Caco-2 (cell line): ENCODE measurements at regions of chr13 and their contacts with region 1.

Region 1: DNA sequence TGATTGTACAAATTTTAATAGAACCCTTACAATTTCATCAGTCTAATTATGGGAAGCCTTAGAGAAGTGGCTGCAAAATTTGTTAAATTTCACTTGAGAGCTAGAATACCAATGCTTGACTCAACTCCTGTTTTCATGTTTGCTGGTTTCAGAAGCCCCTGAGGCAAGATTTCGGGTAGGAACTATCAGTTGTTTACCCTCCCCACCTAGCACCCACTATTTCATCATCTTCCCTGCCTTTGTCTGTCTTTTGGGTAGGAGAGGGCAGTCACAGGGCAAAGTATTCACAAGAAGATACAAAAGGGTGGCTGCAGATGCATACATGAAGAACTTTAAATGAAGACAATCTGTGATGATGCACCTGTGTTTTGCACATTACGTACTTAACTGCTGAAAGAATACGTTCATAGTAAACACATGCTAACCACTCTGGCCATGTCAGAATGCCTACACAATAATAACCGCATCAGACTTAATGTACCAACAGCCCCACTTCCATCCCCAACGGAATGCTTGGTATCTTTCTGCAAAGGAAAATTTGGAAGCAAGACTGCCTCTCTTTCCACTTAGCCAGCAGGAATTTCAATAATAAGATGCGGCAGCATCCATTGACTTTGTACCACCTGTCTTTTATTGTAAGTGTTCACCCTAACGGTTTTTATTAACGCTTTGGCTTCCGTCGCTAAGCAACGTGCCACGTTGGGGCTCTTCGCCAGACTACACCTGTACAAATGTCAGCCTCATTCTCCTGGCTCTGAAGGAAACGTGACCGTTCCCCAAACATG is 30.4 kb downstream of the TPT1 start:
- DNase-seq: no peak
- H3K4me3 ChIP-seq: peak overlapping the region; percentile 53
- H3K4me3 Mint-ChIP-seq: peak overlapping the region; percentile 65
- H3K27ac Mint-ChIP-seq: no peak overlapping the region
- H3K4me1 ChIP-seq: peaks cover 13% of the 10 kb centered on the region
- H3K4me1 Mint-ChIP-seq: peaks cover 10% of the 10 kb centered on the region
- H3K27me3 ChIP-seq: no peaks in the 10 kb centered on the region
- H3K27me3 Mint-ChIP-seq: no peaks in the 10 kb centered on the region
- CTCF ChIP-seq: no peak

Region 2: GRCh38 chr13:44969551-44970484 is 340.7 kb before region 1 on chr13:
- CTCF ChIA-PET with region 1: no interaction called
- POLR2A ChIA-PET with region 1: interaction called, 3 read pairs
- intact Hi-C with region 1: loop called (anchors 1 kb)
- DNase-seq: peak in 1 of 2 experiments; percentile 62
- H3K4me3 ChIP-seq: no peak overlapping the region
- H3K4me3 Mint-ChIP-seq: no peak overlapping the region
- H3K27ac Mint-ChIP-seq: no peak overlapping the region
- H3K4me1 ChIP-seq: peaks cover 14% of the 10 kb centered on the region
- H3K4me1 Mint-ChIP-seq: peaks cover 14% of the 10 kb centered on the region
- H3K27me3 ChIP-seq: no peaks in the 10 kb centered on the region
- H3K27me3 Mint-ChIP-seq: no peaks in the 10 kb centered on the region
- CTCF ChIP-seq: peak; percentile 74 to 81

Region 3: DNA sequence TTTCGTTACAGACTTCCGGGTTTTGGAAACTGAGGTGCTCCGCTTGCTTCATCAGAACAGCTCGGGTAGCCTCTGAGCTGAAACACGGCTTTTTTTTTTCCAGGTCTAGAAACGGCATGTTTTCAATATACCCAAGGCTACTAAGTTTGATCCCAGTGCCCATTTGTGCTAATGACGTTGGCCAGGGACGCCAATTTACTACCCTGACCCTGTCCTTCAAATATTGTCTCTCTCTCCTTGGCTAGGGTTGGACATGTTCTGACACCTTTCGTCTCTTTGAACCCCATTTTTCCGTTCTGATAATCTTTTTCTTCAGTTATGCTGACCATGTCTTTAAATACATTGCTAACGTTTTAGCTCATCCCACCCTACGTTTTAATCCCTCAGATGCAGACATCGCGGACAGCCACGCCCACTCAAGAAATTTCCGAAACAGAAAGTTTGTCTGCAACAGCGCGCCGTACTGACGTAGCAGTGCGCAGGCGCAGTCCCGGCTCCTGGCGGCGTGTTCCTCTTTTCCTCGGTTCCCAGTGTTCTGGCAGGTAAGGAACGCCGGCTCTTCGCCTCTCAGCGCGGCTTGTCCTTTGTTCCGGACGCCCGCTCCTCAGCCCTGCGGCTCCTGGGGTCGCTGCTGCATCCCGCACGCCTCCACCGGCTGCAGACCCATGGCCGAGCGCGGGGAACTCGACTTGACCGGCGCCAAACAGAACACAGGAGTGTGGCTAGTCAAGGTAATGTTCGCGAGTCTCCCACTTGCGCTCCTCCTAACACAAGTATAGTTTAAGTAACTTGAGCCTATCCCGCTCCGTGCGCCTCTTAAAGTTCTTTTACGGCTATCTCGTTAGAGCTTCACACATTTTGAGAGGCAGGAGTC is 190.3 kb before region 1 on chr13 and contains the start of gene GTF2F2:
- CTCF ChIA-PET with region 1: interaction called, 6 read pairs
- POLR2A ChIA-PET with region 1: no interaction called
- intact Hi-C with region 1: loop called (anchors 1 kb)
- DNase-seq: peak; percentile 92 to 94
- H3K4me3 ChIP-seq: peak within 1 kb of the TSS; percentile 64
- H3K4me3 Mint-ChIP-seq: no peak within 1 kb of the TSS
- H3K27ac Mint-ChIP-seq: no peak within 1 kb of the TSS
- H3K4me1 ChIP-seq: peaks cover 11% of the 10 kb centered on the region
- H3K4me1 Mint-ChIP-seq: no peaks in the 10 kb centered on the region
- H3K27me3 ChIP-seq: no peaks in the 10 kb centered on the region
- H3K27me3 Mint-ChIP-seq: no peaks in the 10 kb centered on the region
- CTCF ChIP-seq: no peak
- total RNA-seq, gene GTF2F2: 28.1 and 30.8 TPM in 2 replicates

Region 4: GRCh38 chr13:45132369-45133064 is 178.0 kb before region 1 on chr13:
- CTCF ChIA-PET with region 1: no interaction called
- POLR2A ChIA-PET with region 1: no interaction called
- intact Hi-C with region 1: no loop called
- DNase-seq: no peak
- H3K4me3 ChIP-seq: no peak overlapping the region
- H3K4me3 Mint-ChIP-seq: no peak overlapping the region
- H3K27ac Mint-ChIP-seq: no peak overlapping the region
- H3K4me1 ChIP-seq: no peaks in the 10 kb centered on the region
- H3K4me1 Mint-ChIP-seq: no peaks in the 10 kb centered on the region
- H3K27me3 ChIP-seq: no peaks in the 10 kb centered on the region
- H3K27me3 Mint-ChIP-seq: no peaks in the 10 kb centered on the region
- CTCF ChIP-seq: no peak

Region 5: GRCh38 chr13:45178349-45179162 is 132.0 kb before region 1 on chr13:
- CTCF ChIA-PET with region 1: no interaction called
- POLR2A ChIA-PET with region 1: no interaction called
- intact Hi-C with region 1: no loop called
- DNase-seq: no peak
- H3K4me3 ChIP-seq: no peak overlapping the region
- H3K4me3 Mint-ChIP-seq: no peak overlapping the region
- H3K27ac Mint-ChIP-seq: peak overlapping the region; percentile 20
- H3K4me1 ChIP-seq: peaks cover 19% of the 10 kb centered on the region
- H3K4me1 Mint-ChIP-seq: peaks cover 21% of the 10 kb centered on the region
- H3K27me3 ChIP-seq: no peaks in the 10 kb centered on the region
- H3K27me3 Mint-ChIP-seq: no peaks in the 10 kb centered on the region
- CTCF ChIP-seq: no peak

Region 6: GRCh38 chr13:45257638-45258338 is 52.7 kb before region 1 on chr13:
- CTCF ChIA-PET with region 1: no interaction called
- POLR2A ChIA-PET with region 1: no interaction called
- intact Hi-C with region 1: no loop called
- DNase-seq: no peak
- H3K4me3 ChIP-seq: no peak overlapping the region
- H3K4me3 Mint-ChIP-seq: no peak overlapping the region
- H3K27ac Mint-ChIP-seq: no peak overlapping the region
- H3K4me1 ChIP-seq: peaks cover 40% of the 10 kb centered on the region
- H3K4me1 Mint-ChIP-seq: peaks cover 30% of the 10 kb centered on the region
- H3K27me3 ChIP-seq: no peaks in the 10 kb centered on the region
- H3K27me3 Mint-ChIP-seq: no peaks in the 10 kb centered on the region
- CTCF ChIP-seq: no peak

Region 7: GRCh38 chr13:45768656-45769479 is 458.3 kb after region 1 on chr13:
- CTCF ChIA-PET with region 1: no interaction called
- POLR2A ChIA-PET with region 1: no interaction called
- intact Hi-C with region 1: no loop called
- DNase-seq: no peak
- H3K4me3 ChIP-seq: no peak overlapping the region
- H3K4me3 Mint-ChIP-seq: no peak overlapping the region
- H3K27ac Mint-ChIP-seq: no peak overlapping the region
- H3K4me1 ChIP-seq: no peaks in the 10 kb centered on the region
- H3K4me1 Mint-ChIP-seq: no peaks in the 10 kb centered on the region
- H3K27me3 ChIP-seq: no peaks in the 10 kb centered on the region
- H3K27me3 Mint-ChIP-seq: no peaks in the 10 kb centered on the region
- CTCF ChIP-seq: no peak